ENCODE measurements at regions of chr18 and their contacts with region 1.

Region 1: GRCh38 chr18:52060607-52061304 is 279.2 kb upstream of the DCC start:
- H3K4me3 Mint-ChIP-seq: no peak overlapping the region
- H3K27ac Mint-ChIP-seq: no peak overlapping the region
- H3K4me1 Mint-ChIP-seq: no peaks in the 10 kb centered on the region
- H3K27me3 Mint-ChIP-seq: no peaks in the 10 kb centered on the region

Region 2: GRCh38 chr18:50902797-50903196 is 1158.0 kb before region 1 on chr18:
- intact Hi-C with region 1: no loop called
- H3K4me3 Mint-ChIP-seq: no peak overlapping the region
- H3K27ac Mint-ChIP-seq: no peak overlapping the region
- H3K4me1 Mint-ChIP-seq: no peaks in the 10 kb centered on the region
- H3K27me3 Mint-ChIP-seq: no peaks in the 10 kb centered on the region

Region 3: GRCh38 chr18:53101536-53102105 is 1040.9 kb after region 1 on chr18:
- intact Hi-C with region 1: loop called (anchors 10 kb)
- H3K4me3 Mint-ChIP-seq: no peak overlapping the region
- H3K27ac Mint-ChIP-seq: no peak overlapping the region
- H3K4me1 Mint-ChIP-seq: no peaks in the 10 kb centered on the region
- H3K27me3 Mint-ChIP-seq: no peaks in the 10 kb centered on the region

Measured in dendritic cell treated with granulocyte-macrophage colony-stimulating factor and Interleukin-4, amounts not matched to agents 40 ng/mL and 50 ng/mL, for 4 days (primary cell).